Dorsolateral prefrontal cortex (tissue), 120 donors: ENCODE measurements at regions of chr1 and their contacts with region 1.

Region 1: GRCh38 chr1:151839457-151840405 is at the start of gene C2CD4D:
- DNase-seq: peak; percentile 66 to 87 (median 84)
- H3K4me3 ChIP-seq: peak within 1 kb of the TSS; percentile 34 to 80 (median 62)
- H3K27ac ChIP-seq: peak within 1 kb of the TSS; percentile 66 to 99 (median 96)
- H3K27me3 ChIP-seq: peaks cover 0 to 18% (median 0%) of the 10 kb centered on the region in 45 donors
- CTCF ChIP-seq: peak in 20 of 56 donors; percentile 1 to 48 (median 20)
- total RNA-seq, gene C2CD4D: 0.56 to 4.3 (median 1.4) TPM

Region 2: DNA sequence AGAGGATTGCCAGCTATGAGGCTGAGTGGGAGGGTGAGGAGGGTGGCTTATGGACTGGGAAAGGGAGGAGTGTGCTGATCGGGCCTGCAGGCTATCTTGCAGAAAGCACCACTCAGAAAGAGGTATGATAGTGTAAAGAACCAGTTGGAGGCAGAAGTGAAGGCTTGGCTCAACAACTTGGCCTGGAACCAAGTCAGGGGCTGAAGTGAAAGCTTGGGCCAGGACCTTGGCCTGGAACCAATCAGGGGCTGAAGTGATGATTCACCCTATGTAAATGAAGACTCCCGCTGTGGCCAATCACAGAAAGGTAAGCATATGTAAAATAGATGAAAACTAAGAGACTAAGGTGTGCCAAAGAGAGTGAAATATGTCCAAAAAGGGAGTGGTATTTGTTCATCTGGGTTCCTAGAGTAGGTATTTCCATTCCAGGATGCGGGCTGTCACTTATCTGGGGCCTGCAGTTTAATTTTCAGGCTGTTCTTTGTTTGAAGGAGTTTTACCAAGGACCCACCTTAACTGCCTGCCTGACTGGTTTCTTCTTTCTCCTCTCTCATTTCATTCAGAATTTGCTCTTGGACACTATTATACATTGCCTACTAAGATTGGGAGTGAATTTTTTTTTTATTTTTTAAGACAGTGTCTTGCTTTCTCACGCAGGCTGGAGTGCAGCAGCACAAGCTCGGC is 487.6 kb before region 1 on chr1:
- intact Hi-C with region 1: no loop called
- DNase-seq: no peak
- H3K4me3 ChIP-seq: no peak overlapping the region
- H3K27ac ChIP-seq: no peak overlapping the region
- H3K27me3 ChIP-seq: no peaks in the 10 kb centered on the region
- CTCF ChIP-seq: no peak

Region 3: DNA sequence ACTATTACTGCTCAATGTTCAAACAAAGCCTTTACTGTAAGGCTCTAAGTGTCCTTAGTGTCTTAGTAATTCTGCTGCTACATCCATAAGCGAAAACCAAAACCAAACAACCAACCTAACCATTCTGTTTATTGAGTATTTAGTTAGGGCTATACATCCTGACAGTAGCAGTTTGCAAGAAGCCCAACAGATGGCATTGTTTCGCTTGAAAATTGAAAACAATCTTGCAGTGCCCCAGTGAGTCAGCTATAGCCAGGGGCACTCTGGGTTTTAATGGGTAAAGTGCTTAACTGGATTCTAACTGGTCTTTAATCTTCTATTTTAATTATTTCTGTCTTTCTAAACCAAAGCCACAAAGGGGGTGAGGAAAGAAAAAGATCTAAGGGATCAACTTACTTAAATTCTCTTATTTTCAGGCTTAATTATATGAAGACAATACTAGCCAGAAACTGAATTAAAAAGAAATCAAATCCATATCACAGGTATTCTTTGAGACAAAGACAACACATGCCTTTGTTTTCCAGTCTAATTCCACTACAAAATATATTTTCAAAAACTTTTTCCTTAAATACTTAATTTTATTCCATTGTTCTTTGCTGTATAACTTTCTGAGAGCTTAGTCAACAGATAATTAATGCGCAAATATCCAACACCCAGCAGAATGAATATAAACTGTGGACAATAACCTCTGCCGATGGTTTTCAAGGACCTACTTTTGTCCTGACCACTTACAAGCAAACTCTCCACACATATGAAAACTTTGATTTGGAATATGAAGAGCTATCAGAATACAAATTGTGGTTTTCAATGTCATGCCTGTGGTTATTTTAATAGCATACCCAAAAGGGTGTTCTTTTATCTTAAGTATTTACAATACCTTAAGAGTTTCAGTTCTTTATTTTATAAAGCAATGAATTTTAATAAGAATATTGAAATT is 395.6 kb before region 1 on chr1:
- intact Hi-C with region 1: loop called in 1 of 2 experiments (anchors 5 kb)
- DNase-seq: peak in 4 of 10 donors; percentile 22 to 59 (median 50)
- H3K4me3 ChIP-seq: peak overlapping the region in 1 of 59 donors; percentile 5
- H3K27ac ChIP-seq: peak overlapping the region in 8 of 59 donors; percentile 3 to 40 (median 27)
- H3K27me3 ChIP-seq: no peaks in the 10 kb centered on the region
- CTCF ChIP-seq: peak; percentile 40 to 84 (median 72)

Region 4: DNA sequence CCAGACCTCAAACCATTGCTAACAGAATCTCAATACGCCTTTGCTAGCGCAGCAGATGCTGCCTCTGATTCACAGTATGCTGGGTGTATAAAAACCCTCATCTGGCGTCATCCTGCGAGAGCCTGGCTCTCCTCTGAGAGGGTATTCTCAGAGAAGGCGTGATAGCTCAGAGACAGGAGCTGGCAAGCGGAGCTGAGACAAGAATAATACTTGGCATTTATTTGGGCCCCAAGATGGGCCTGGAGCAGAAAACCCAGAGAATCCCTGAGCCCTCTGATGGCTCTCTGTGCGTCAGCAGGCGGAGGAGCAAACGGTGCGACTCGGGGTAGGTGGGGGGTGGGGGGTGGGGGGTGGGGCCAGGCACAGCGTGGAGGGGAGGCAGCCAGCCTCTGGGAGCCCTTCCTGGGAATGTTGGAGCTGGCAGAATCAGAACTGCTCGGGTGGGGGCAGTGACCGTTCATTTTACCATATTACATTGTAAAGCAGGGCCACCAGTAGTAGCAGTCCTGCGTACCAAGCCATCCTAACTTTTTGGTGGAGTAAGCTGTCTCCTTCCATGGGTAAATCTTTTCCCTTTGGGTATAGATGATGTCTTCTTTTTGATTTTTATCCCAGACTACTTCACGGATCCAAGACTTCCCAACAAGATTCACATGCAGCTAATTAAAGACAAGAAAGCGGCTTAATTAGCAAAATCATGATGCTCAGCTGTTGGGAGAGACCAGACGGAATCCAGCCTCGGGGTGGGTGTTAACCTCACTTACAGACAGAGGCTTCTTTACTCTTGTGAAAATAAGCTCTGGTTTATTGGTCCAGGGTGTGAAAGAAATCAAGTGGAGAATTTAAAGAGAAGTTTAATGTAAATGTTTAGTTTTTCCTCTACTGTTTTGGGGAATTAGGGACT is 111.3 kb before region 1 on chr1:
- intact Hi-C with region 1: loop called in 1 of 2 experiments (anchors 5 kb)
- DNase-seq: peak in 9 of 10 donors; percentile 52 to 86 (median 76)
- H3K4me3 ChIP-seq: peak overlapping the region in 53 of 59 donors; percentile 2 to 60 (median 38)
- H3K27ac ChIP-seq: peak overlapping the region in 56 of 59 donors; percentile 12 to 90 (median 70)
- H3K27me3 ChIP-seq: peaks cover 0 to 9% (median 0%) of the 10 kb centered on the region in 45 donors
- CTCF ChIP-seq: peak in 2 of 56 donors; percentile 9 to 11

Region 5: GRCh38 chr1:151871252-151872030 is 31.7 kb after region 1 on chr1:
- intact Hi-C with region 1: loop called in 1 of 2 experiments (anchors 5 kb)
- DNase-seq: no peak
- H3K4me3 ChIP-seq: no peak overlapping the region
- H3K27ac ChIP-seq: peak overlapping the region in 15 of 59 donors; percentile 1 to 56 (median 25)
- H3K27me3 ChIP-seq: no peaks in the 10 kb centered on the region
- CTCF ChIP-seq: no peak